ENCODE measurements at regions of chr18 and their contacts with region 1.

Region 1: DNA sequence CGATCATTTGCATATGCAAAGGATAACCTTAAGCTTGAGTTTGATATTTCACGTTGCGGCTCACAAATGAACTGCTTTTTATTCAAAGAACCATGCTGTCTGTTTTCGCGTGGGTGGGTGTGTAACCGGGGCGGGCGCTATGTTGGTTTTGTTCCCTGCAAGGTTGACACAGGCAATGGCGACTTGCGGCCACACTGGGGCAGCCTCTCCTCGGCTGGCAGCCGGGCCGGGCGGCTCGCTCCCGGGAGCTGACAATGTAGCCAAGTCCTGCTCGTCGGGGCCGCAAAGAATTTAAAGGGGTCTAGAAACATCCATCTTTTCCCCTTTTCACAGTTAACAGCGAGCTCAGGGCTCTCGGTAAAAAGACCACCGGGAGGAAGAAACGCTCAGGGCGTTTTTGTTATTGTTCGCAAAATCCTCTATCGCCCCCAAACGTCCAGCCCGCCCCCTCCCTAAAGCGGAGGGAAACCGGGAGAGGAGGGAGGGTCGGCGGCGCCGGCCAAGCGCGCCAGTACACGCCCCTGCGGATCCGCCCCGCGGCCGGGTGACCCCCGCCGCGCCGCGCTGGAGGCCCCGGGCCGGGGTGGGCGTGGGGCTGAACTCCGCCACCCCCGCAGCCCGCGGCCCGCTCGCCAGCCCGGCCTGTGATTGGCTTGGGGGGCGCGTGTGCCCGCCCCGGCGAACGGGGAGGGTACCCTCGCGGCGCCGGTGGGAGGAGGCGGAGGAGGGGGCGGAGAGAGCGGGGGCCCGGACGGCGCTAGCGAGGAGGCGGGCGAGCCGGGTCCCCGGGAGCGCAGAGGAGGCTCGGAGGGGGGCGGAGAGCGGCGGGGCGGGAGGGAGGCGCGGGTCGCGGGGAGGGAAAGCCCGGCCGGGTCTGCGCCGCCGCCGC is at the start of gene NEDD4L:
- DNase-seq: peak; percentile 83
- ATAC-seq: peak; percentile 85
- H3K4me3 Mint-ChIP-seq: peak within 1 kb of the TSS; percentile 93
- H3K27ac Mint-ChIP-seq: peak within 1 kb of the TSS; percentile 82
- H3K4me1 Mint-ChIP-seq: peaks cover 41% of the 10 kb centered on the region
- H3K27me3 Mint-ChIP-seq: no peaks in the 10 kb centered on the region
- CTCF ChIP-seq: no peak
- total RNA-seq, gene NEDD4L: 24.9 and 32.6 TPM in 2 replicates

Region 2: GRCh38 chr18:57833443-57834101 is 210.2 kb before region 1 on chr18:
- CTCF ChIA-PET with region 1: no interaction called
- POLR2A ChIA-PET with region 1: no interaction called
- intact Hi-C with region 1: loop called (anchors 5 kb)
- DNase-seq: no peak
- ATAC-seq: peak; percentile 38
- H3K4me3 Mint-ChIP-seq: peak overlapping the region; percentile 72
- H3K27ac Mint-ChIP-seq: peak overlapping the region; percentile 87
- H3K4me1 Mint-ChIP-seq: peaks cover 64% of the 10 kb centered on the region
- H3K27me3 Mint-ChIP-seq: no peaks in the 10 kb centered on the region
- CTCF ChIP-seq: no peak

Region 3: DNA sequence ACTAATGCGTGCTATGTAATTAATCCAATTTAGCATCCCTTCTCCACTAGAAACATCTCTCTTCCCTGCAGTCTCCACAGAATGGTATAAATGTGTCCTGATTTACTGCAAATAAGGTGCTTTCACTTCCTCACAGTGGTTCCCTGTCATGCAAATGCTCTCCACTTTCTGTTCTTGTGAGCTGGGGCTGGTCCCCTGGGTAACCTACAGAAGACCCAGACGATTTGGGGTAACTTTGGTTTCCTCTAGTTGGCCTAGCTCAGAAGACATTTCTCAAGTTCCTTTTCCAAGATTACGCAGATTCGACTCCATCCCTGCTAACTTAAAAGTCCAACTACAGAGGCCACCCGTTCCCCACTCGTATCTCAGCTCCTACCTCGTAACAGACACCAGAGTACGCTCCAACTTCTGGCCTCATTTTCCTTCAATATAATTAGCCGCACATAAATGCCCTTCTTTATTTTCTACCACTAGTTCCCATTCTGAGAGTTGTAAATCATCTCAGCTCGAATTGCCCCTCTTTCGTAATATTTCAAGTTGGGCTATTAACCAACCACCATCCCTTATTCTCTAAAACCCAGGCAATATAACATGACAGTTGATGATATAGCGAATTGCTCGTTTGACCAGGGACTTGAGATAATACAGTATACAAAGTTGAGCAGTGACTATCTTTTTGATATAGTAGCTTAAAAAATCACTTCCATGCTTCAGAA is 28.5 kb before region 1 on chr18:
- CTCF ChIA-PET with region 1: interaction called, 8 read pairs
- POLR2A ChIA-PET with region 1: interaction called, 8 read pairs
- intact Hi-C with region 1: loop called (anchors 1 kb)
- DNase-seq: peak; percentile 35
- ATAC-seq: peak; percentile 98
- H3K4me3 Mint-ChIP-seq: peak overlapping the region; percentile 55
- H3K27ac Mint-ChIP-seq: peak overlapping the region; percentile 78
- H3K4me1 Mint-ChIP-seq: peaks cover 32% of the 10 kb centered on the region
- H3K27me3 Mint-ChIP-seq: no peaks in the 10 kb centered on the region
- CTCF ChIP-seq: no peak

Region 4: DNA sequence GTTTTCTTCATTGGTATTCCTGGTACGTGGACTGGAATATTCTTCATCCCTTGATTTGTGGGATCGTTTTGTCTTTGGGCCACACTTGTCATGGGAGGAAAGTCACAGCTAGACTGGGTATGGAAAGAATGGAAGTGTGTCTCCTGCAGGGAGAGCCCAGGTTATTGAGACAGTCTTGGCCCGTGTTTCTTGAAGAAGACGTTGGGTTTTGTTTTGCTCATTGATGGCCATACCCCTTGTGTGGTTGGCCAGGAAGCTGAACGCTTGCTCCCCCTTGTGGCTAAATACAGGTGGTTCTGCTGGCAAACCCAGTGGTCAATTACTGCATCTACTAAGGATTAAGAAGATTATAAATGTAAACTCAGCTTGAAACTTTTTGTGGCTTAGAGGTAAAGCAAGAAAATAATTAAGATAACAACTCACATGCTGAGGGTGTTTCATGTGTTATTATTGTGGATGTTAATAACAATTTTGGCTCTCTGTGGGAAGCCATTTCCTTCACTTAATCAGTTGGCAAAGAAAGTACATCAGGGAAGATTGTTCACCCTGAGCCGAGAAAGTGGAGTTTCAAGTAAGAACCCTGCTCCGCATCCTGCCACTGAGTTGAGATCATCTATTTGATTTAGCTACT is 92.1 kb after region 1 on chr18:
- CTCF ChIA-PET with region 1: interaction called, 18 read pairs
- POLR2A ChIA-PET with region 1: no interaction called
- intact Hi-C with region 1: loop called (anchors 1 kb)
- DNase-seq: peak; percentile 25
- ATAC-seq: peak; percentile 65
- H3K4me3 Mint-ChIP-seq: peak overlapping the region; percentile 52
- H3K27ac Mint-ChIP-seq: peak overlapping the region; percentile 3
- H3K4me1 Mint-ChIP-seq: peaks cover 33% of the 10 kb centered on the region
- H3K27me3 Mint-ChIP-seq: no peaks in the 10 kb centered on the region
- CTCF ChIP-seq: no peak

Region 5: DNA sequence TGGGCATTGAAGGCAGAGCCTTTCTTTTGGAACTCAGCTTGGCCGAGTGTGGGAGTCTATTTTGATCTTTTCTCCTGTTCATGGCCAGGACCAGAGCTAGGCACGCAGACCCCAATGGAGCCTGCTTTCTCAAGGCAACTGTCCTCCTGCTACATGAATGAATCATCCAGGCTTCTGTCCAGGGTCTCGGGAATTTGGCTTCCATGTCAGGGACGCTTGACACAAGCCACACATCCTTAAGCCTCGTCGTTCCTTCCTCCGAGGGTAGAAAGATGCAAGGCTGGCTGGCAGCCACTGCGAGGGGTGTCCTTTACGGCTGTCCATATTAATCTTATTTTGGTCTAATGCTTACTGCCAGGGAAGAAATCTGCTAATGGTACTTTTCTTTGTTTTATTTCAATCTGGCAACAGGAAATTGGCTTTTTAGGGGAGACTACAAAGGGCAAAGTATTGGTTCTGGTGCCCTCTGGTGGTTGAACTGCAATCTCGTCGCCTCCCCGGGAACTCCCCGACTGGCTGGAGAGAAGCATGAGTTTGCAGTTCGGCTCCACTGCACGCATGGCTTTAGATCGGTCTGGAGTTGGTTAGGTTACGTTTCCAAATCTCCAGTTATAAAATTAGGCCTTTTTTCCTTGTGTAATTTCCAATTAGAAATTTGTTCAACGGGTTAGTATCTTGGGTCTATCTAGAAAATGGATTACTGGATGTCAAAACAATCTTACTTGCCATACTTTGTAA is 449.9 kb after region 1 on chr18:
- CTCF ChIA-PET with region 1: no interaction called
- POLR2A ChIA-PET with region 1: no interaction called
- intact Hi-C with region 1: loop called (anchors 1 kb)
- DNase-seq: peak; percentile 27
- ATAC-seq: peak; percentile 87
- H3K4me3 Mint-ChIP-seq: no peak overlapping the region
- H3K27ac Mint-ChIP-seq: no peak overlapping the region
- H3K4me1 Mint-ChIP-seq: peaks cover 7% of the 10 kb centered on the region
- H3K27me3 Mint-ChIP-seq: peaks cover 37% of the 10 kb centered on the region
- CTCF ChIP-seq: peak; percentile 55

Region 6: GRCh38 chr18:59139371-59140298 is 1095.9 kb after region 1 on chr18 and contains the start of gene SEC11C:
- CTCF ChIA-PET with region 1: no interaction called
- POLR2A ChIA-PET with region 1: no interaction called
- intact Hi-C with region 1: loop called (anchors 1 kb)
- DNase-seq: peak; percentile 93
- ATAC-seq: peak; percentile 84
- H3K4me3 Mint-ChIP-seq: peak within 1 kb of the TSS; percentile 95
- H3K27ac Mint-ChIP-seq: peak within 1 kb of the TSS; percentile 100
- H3K4me1 Mint-ChIP-seq: peaks cover 44% of the 10 kb centered on the region
- H3K27me3 Mint-ChIP-seq: peaks cover 8% of the 10 kb centered on the region
- CTCF ChIP-seq: no peak
- total RNA-seq, gene SEC11C: 112 and 126 TPM in 2 replicates

Measured in activated B cell treated with CpG ODN at 0.5 μM for 24 hours (primary cell).